Esophagus muscularis mucosa (tissue), 4 donors: ENCODE measurements at regions of chr22 and their contacts with region 1.

Region 1: DNA sequence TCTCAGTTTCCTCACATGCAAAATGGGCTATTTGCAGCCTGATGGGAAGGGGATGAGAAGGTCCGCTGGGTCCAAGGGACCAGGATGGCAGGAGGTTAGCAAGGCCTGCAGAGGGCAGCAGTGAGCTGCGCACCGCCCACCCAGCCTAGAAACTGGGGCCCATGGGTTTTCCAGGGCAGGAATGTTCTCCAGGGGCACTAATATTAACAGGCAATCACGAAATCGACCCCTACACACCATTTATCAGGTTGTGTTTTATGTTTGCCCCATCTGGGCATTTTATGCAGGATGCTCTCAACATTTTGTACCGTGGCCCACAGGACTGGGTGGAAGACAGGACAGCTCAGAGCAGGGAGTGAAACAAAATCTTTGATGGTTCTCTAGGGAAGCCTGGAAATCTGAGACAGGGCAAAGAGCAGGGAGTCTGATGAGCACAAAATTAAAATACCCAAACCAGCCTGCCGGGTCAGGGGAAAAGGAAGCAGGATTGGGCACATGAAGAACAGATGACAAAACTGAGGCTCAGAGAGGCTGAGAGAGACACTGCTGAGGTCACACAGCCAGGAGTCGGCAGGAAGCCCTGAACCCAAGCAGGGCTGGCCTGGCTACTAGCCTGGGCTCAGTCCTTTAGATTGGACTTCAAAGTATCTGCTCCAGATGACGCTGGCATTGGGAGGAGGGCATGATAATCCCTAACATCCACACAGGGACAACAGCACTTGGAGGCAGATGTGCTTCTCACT is 1.6 kb upstream of the BCR start:
- DNase-seq: no peak
- H3K4me3 ChIP-seq: peak overlapping the region in 1 of 4 donors; percentile 69
- H3K27ac ChIP-seq: peak overlapping the region; percentile 85 to 89 (median 87)
- H3K4me1 ChIP-seq: peaks cover 37 to 56% (median 52%) of the 10 kb centered on the region in 4 donors
- H3K27me3 ChIP-seq: no peaks in the 10 kb centered on the region
- CTCF ChIP-seq: peak; percentile 95 to 97 (median 97)
- EP300 ChIP-seq: no peak
- POLR2A ChIP-seq: no peak

Region 2: GRCh38 chr22:23219822-23220484 is 41.3 kb after region 1 on chr22:
- intact Hi-C with region 1: no loop called
- DNase-seq: no peak
- H3K4me3 ChIP-seq: no peak overlapping the region
- H3K27ac ChIP-seq: peak overlapping the region in 2 of 4 donors; percentile 30 to 58
- H3K4me1 ChIP-seq: peaks cover 89 to 99% (median 96%) of the 10 kb centered on the region in 4 donors
- H3K27me3 ChIP-seq: no peaks in the 10 kb centered on the region
- CTCF ChIP-seq: no peak
- EP300 ChIP-seq: no peak
- POLR2A ChIP-seq: no peak

Region 3: GRCh38 chr22:23281406-23282088 is 102.9 kb after region 1 on chr22:
- intact Hi-C with region 1: loop called (anchors 1 kb)
- DNase-seq: peak; percentile 97
- H3K4me3 ChIP-seq: peak overlapping the region in 3 of 4 donors; percentile 27 to 36 (median 29)
- H3K27ac ChIP-seq: peak overlapping the region; percentile 83 to 90 (median 88)
- H3K4me1 ChIP-seq: peaks cover 48 to 89% (median 86%) of the 10 kb centered on the region in 4 donors
- H3K27me3 ChIP-seq: no peaks in the 10 kb centered on the region
- CTCF ChIP-seq: peak; percentile 95 to 97 (median 96)
- EP300 ChIP-seq: no peak
- POLR2A ChIP-seq: no peak